CD8-positive, alpha-beta T cell (primary cell): ENCODE measurements at regions of chr6 and their contacts with region 1.

Region 1: GRCh38 chr6:134640975-134641429 is 308.9 kb downstream of the ALDH8A1 start:
- DNase-seq: peak; percentile 53 to 86 (median 77)
- ATAC-seq: peak; percentile 97
- H3K4me3 ChIP-seq: no peak overlapping the region
- H3K4me3 Mint-ChIP-seq: no peak overlapping the region
- H3K27ac ChIP-seq: no peak overlapping the region
- H3K27ac Mint-ChIP-seq: no peak overlapping the region
- H3K4me1 ChIP-seq: no peaks in the 10 kb centered on the region
- H3K4me1 Mint-ChIP-seq: peaks cover 10% of the 10 kb centered on the region
- H3K27me3 ChIP-seq: no peaks in the 10 kb centered on the region
- H3K27me3 Mint-ChIP-seq: no peaks in the 10 kb centered on the region
- CTCF ChIP-seq: peak; percentile 89

Region 2: GRCh38 chr6:134161036-134161435 is 480.0 kb before region 1 on chr6:
- CTCF ChIA-PET with region 1: interaction called, 19 read pairs
- POLR2A ChIA-PET with region 1: no interaction called
- intact Hi-C with region 1: no loop called
- DNase-seq: no peak
- ATAC-seq: no peak
- H3K4me3 ChIP-seq: no peak overlapping the region
- H3K4me3 Mint-ChIP-seq: no peak overlapping the region
- H3K27ac ChIP-seq: no peak overlapping the region
- H3K27ac Mint-ChIP-seq: no peak overlapping the region
- H3K4me1 ChIP-seq: no peaks in the 10 kb centered on the region
- H3K4me1 Mint-ChIP-seq: no peaks in the 10 kb centered on the region
- H3K27me3 ChIP-seq: no peaks in the 10 kb centered on the region
- H3K27me3 Mint-ChIP-seq: no peaks in the 10 kb centered on the region
- CTCF ChIP-seq: no peak

Region 3: DNA sequence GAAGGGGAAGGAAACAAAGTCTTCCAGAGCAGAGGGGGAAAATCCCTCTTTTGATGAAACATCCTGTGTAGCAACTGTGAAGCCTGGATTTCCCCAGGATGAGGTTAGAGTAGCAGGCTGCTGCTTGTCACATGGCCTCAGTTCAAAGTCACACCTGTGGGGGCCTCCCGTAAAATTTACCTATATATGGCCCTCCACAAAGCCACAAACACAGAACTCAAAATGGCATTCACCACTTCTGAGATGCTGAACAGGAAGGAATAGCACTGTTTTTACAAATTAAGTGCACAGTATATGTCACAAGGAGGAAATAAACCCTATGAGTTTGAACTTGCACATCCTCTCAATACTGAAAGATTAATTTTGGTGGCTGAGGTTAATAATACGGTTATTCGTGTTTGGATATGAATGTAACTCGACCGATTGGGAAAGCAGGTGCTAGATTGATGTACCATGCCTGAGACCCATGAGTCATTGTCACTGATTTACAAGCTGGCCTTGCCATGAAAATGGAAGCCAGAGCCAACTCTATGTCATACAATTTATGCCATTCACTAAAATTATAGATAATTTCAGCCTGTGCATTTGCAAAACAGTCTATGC is 393.7 kb before region 1 on chr6:
- CTCF ChIA-PET with region 1: interaction called, 10 read pairs
- POLR2A ChIA-PET with region 1: no interaction called
- intact Hi-C with region 1: no loop called
- DNase-seq: peak; percentile 47 to 96 (median 68)
- ATAC-seq: peak; percentile 87
- H3K4me3 ChIP-seq: no peak overlapping the region
- H3K4me3 Mint-ChIP-seq: peak overlapping the region; percentile 54
- H3K27ac ChIP-seq: peak overlapping the region; percentile 20 to 76
- H3K27ac Mint-ChIP-seq: peak overlapping the region; percentile 92
- H3K4me1 ChIP-seq: peaks cover 63% of the 10 kb centered on the region
- H3K4me1 Mint-ChIP-seq: peaks cover 61% of the 10 kb centered on the region
- H3K27me3 ChIP-seq: no peaks in the 10 kb centered on the region
- H3K27me3 Mint-ChIP-seq: no peaks in the 10 kb centered on the region
- CTCF ChIP-seq: no peak

Region 4: DNA sequence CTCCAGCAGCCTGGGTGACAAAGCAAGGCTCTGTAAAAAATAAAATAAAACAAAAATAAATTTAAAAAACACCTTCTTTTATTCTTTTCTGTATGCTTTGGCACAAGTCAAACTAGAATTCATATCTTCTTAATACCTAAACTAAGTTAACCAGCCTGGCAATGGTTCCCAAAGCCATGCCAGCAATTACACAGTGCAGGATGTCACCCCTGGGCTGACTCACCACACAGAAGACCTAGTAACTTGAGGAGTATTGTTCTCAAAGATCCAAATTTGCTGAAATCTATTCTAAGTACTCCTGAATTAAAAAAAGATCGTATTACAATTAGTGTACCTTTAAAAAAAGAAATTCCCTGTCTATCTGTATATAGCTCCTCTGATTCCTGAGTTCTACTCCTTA is 160.4 kb before region 1 on chr6:
- CTCF ChIA-PET with region 1: no interaction called
- POLR2A ChIA-PET with region 1: no interaction called
- intact Hi-C with region 1: no loop called
- DNase-seq: no peak
- ATAC-seq: no peak
- H3K4me3 ChIP-seq: no peak overlapping the region
- H3K4me3 Mint-ChIP-seq: no peak overlapping the region
- H3K27ac ChIP-seq: no peak overlapping the region
- H3K27ac Mint-ChIP-seq: no peak overlapping the region
- H3K4me1 ChIP-seq: no peaks in the 10 kb centered on the region
- H3K4me1 Mint-ChIP-seq: no peaks in the 10 kb centered on the region
- H3K27me3 ChIP-seq: no peaks in the 10 kb centered on the region
- H3K27me3 Mint-ChIP-seq: no peaks in the 10 kb centered on the region
- CTCF ChIP-seq: no peak

Region 5: DNA sequence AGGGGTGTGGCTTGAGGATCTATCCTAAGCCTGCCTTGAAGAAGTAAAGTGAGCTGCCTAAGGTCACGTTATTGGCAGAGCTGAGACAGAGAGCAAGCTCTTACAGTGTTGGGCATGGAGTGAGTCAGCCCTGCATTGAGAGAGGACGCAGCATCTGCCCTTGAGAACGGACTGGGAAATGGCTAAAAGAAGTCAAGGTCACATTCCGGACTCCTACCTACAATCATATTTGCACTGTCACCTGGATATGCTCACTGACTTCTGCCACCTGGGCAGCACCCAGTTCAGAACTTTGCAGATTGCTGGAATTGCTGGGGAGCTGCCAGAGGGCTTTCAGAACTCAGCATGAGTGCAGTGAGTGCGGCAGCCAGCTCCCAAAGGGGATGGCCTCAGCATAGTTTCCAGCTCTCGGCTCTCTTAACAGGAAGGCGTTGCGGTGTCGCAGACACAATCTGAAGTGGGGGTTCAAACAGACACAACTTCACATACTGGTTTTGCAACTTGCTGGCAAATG is 123.8 kb before region 1 on chr6:
- CTCF ChIA-PET with region 1: interaction called, 4 read pairs
- POLR2A ChIA-PET with region 1: no interaction called
- intact Hi-C with region 1: loop called in 1 of 2 experiments (anchors 2 kb)
- DNase-seq: peak in 1 of 9 experiments; percentile 37
- ATAC-seq: no peak
- H3K4me3 ChIP-seq: no peak overlapping the region
- H3K4me3 Mint-ChIP-seq: no peak overlapping the region
- H3K27ac ChIP-seq: no peak overlapping the region
- H3K27ac Mint-ChIP-seq: no peak overlapping the region
- H3K4me1 ChIP-seq: peaks cover 17% of the 10 kb centered on the region
- H3K4me1 Mint-ChIP-seq: peaks cover 28% of the 10 kb centered on the region
- H3K27me3 ChIP-seq: no peaks in the 10 kb centered on the region
- H3K27me3 Mint-ChIP-seq: no peaks in the 10 kb centered on the region
- CTCF ChIP-seq: no peak

Region 6: GRCh38 chr6:134630508-134631121 is 10.4 kb before region 1 on chr6:
- CTCF ChIA-PET with region 1: interaction called, 13 read pairs
- POLR2A ChIA-PET with region 1: interaction called, 3 read pairs
- intact Hi-C with region 1: no loop called
- DNase-seq: peak in 1 of 9 experiments; percentile 14
- ATAC-seq: no peak
- H3K4me3 ChIP-seq: no peak overlapping the region
- H3K4me3 Mint-ChIP-seq: no peak overlapping the region
- H3K27ac ChIP-seq: no peak overlapping the region
- H3K27ac Mint-ChIP-seq: no peak overlapping the region
- H3K4me1 ChIP-seq: peaks cover 12% of the 10 kb centered on the region
- H3K4me1 Mint-ChIP-seq: peaks cover 17% of the 10 kb centered on the region
- H3K27me3 ChIP-seq: no peaks in the 10 kb centered on the region
- H3K27me3 Mint-ChIP-seq: no peaks in the 10 kb centered on the region
- CTCF ChIP-seq: no peak

Region 7: GRCh38 chr6:134938896-134939295 is 297.9 kb after region 1 on chr6:
- CTCF ChIA-PET with region 1: interaction called, 21 read pairs
- POLR2A ChIA-PET with region 1: no interaction called
- intact Hi-C with region 1: loop called (anchors 1 to 2 kb)
- DNase-seq: peak in 6 of 9 experiments; percentile 4 to 76 (median 40)
- ATAC-seq: peak; percentile 96
- H3K4me3 ChIP-seq: no peak overlapping the region
- H3K4me3 Mint-ChIP-seq: no peak overlapping the region
- H3K27ac ChIP-seq: no peak overlapping the region
- H3K27ac Mint-ChIP-seq: no peak overlapping the region
- H3K4me1 ChIP-seq: peaks cover 9% of the 10 kb centered on the region
- H3K4me1 Mint-ChIP-seq: peaks cover 10% of the 10 kb centered on the region
- H3K27me3 ChIP-seq: no peaks in the 10 kb centered on the region
- H3K27me3 Mint-ChIP-seq: no peaks in the 10 kb centered on the region
- CTCF ChIP-seq: no peak